Activated CD4-positive, alpha-beta T cell treated with anti-CD3 and anti-CD28 coated beads for 36 hours (primary cell): ENCODE measurements at regions of chr9 and their contacts with region 1.

Region 1: GRCh38 chr9:87707805-87708506 is 18.0 kb upstream of the CTSL start:
- DNase-seq: peak; percentile 31
- ATAC-seq: peak; percentile 40
- H3K4me3 Mint-ChIP-seq: no peak overlapping the region
- H3K27ac Mint-ChIP-seq: no peak overlapping the region
- H3K4me1 Mint-ChIP-seq: peaks cover 44% of the 10 kb centered on the region
- H3K27me3 Mint-ChIP-seq: peaks cover 5% of the 10 kb centered on the region

Region 2: GRCh38 chr9:87375397-87376073 is 332.4 kb before region 1 on chr9:
- CTCF ChIA-PET with region 1: no interaction called
- POLR2A ChIA-PET with region 1: no interaction called
- intact Hi-C with region 1: loop called in 1 of 2 experiments (anchors 1 kb)
- DNase-seq: no peak
- ATAC-seq: no peak
- H3K4me3 Mint-ChIP-seq: no peak overlapping the region
- H3K27ac Mint-ChIP-seq: no peak overlapping the region
- H3K4me1 Mint-ChIP-seq: peaks cover 15% of the 10 kb centered on the region
- H3K27me3 Mint-ChIP-seq: peaks cover 37% of the 10 kb centered on the region

Region 3: GRCh38 chr9:87742813-87743428 is 35.0 kb after region 1 on chr9:
- CTCF ChIA-PET with region 1: no interaction called
- POLR2A ChIA-PET with region 1: no interaction called
- intact Hi-C with region 1: no loop called
- DNase-seq: no peak
- ATAC-seq: no peak
- H3K4me3 Mint-ChIP-seq: no peak overlapping the region
- H3K27ac Mint-ChIP-seq: no peak overlapping the region
- H3K4me1 Mint-ChIP-seq: peaks cover 19% of the 10 kb centered on the region
- H3K27me3 Mint-ChIP-seq: peaks cover 6% of the 10 kb centered on the region

Region 4: GRCh38 chr9:87792831-87793288 is 84.9 kb after region 1 on chr9:
- CTCF ChIA-PET with region 1: no interaction called
- POLR2A ChIA-PET with region 1: no interaction called
- intact Hi-C with region 1: loop called in 1 of 2 experiments (anchors 5 kb)
- DNase-seq: peak; percentile 72
- ATAC-seq: peak; percentile 94
- H3K4me3 Mint-ChIP-seq: no peak overlapping the region
- H3K27ac Mint-ChIP-seq: peak overlapping the region; percentile 48
- H3K4me1 Mint-ChIP-seq: peaks cover 26% of the 10 kb centered on the region
- H3K27me3 Mint-ChIP-seq: peaks cover 4% of the 10 kb centered on the region